MCF 10A (cell line): ENCODE measurements at regions of chr9 and their contacts with region 1.

Region 1: GRCh38 chr9:106648799-106649198 is 214.2 kb upstream of the ZNF462 start:
- DNase-seq: peak; percentile 32
- H3K4me3 Mint-ChIP-seq: no peak overlapping the region
- H3K27ac Mint-ChIP-seq: no peak overlapping the region
- H3K4me1 Mint-ChIP-seq: peaks cover 6% of the 10 kb centered on the region
- H3K27me3 Mint-ChIP-seq: no peaks in the 10 kb centered on the region
- CTCF ChIP-seq: peak; percentile 50

Region 2: DNA sequence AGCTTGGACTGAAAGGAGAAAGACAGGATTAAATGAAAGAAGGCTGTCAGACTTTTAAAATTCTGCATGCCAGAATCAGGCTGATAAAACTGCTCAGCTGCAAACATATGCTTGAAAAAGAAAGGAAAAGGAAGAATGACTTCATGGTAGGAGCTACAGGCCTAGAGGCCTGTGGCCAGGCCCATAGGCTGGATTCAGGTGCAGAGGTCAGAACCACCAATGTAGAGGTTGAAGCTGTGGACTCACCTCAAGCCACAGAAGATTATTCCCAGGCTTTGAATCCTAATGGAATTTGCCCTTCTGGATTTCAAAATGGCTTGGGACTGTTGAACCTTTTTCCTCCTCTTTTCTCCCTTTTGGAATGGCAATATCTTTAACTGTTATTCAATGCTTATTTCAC is 906.7 kb before region 1 on chr9:
- CTCF ChIA-PET with region 1: no interaction called
- POLR2A ChIA-PET with region 1: no interaction called
- intact Hi-C with region 1: no loop called
- DNase-seq: no peak
- H3K4me3 Mint-ChIP-seq: no peak overlapping the region
- H3K27ac Mint-ChIP-seq: no peak overlapping the region
- H3K4me1 Mint-ChIP-seq: no peaks in the 10 kb centered on the region
- H3K27me3 Mint-ChIP-seq: no peaks in the 10 kb centered on the region
- CTCF ChIP-seq: no peak

Region 3: GRCh38 chr9:105901514-105902109 is 747.2 kb before region 1 on chr9:
- CTCF ChIA-PET with region 1: no interaction called
- POLR2A ChIA-PET with region 1: no interaction called
- intact Hi-C with region 1: loop called (anchors 2 kb)
- DNase-seq: peak; percentile 68
- H3K4me3 Mint-ChIP-seq: no peak overlapping the region
- H3K27ac Mint-ChIP-seq: no peak overlapping the region
- H3K4me1 Mint-ChIP-seq: no peaks in the 10 kb centered on the region
- H3K27me3 Mint-ChIP-seq: no peaks in the 10 kb centered on the region
- CTCF ChIP-seq: peak; percentile 63

Region 4: DNA sequence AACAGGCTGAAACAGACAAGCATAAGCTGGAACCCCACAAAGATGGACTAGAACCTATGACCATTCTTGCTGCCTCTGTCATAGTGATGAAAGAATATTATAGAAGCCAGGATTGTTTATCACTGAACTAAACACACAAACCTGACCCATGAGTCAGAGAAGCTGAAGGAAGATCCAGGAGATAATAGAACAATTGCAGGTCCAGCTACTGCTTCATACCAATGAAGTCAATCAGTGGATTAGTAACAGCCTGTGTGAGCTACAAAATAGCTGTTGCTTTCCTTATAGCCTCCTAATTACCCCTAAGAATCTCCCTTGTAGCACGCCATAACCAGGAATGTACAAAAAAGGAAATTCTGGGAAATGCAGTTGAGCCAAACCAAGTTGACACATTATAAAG is 245.7 kb before region 1 on chr9:
- CTCF ChIA-PET with region 1: no interaction called
- POLR2A ChIA-PET with region 1: no interaction called
- intact Hi-C with region 1: no loop called
- DNase-seq: peak; percentile 18
- H3K4me3 Mint-ChIP-seq: no peak overlapping the region
- H3K27ac Mint-ChIP-seq: no peak overlapping the region
- H3K4me1 Mint-ChIP-seq: no peaks in the 10 kb centered on the region
- H3K27me3 Mint-ChIP-seq: no peaks in the 10 kb centered on the region
- CTCF ChIP-seq: no peak

Region 5: GRCh38 chr9:107137495-107138202 is 488.9 kb after region 1 on chr9:
- CTCF ChIA-PET with region 1: interaction called, 3 read pairs
- POLR2A ChIA-PET with region 1: no interaction called
- intact Hi-C with region 1: loop called (anchors 2 kb)
- DNase-seq: peak; percentile 59
- H3K4me3 Mint-ChIP-seq: no peak overlapping the region
- H3K27ac Mint-ChIP-seq: no peak overlapping the region
- H3K4me1 Mint-ChIP-seq: no peaks in the 10 kb centered on the region
- H3K27me3 Mint-ChIP-seq: peaks cover 33% of the 10 kb centered on the region
- CTCF ChIP-seq: peak; percentile 71

Region 6: DNA sequence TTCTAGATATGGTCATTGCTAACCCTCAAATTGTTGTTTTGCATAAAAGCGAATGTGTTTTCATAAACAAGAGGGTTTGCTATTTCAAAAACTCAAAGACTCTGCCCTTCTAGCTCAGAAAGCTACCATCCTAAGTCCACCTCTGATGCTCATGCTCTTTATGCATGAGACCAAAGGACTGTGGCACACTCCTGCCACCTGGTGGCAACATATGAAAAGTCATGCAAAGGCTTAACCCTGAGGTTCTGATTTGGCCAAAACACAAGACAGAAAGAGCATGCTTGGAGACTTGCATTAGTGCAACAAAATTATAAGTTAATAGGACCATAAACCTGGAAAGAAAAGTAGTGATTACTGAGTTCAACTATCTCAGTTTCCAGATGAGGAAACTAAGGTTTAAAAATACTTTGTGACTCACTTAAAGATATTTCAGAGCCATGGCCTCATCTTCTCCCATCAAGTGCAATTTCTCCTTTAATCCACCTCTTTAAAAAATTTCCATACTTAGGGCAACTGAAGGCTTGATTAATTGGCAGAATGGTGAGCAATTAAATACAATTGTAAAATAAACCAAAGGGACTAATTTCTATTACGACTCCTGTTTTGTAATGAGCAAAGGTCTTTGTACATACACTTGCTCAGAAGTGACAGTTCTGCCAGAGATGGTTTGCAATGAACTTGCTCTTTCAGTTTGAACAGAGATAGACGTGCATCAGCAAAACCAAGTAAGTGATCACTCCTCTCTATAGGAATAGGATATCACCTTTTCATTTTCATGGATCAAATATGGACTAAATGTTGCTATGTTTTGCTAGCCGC is 523.6 kb after region 1 on chr9:
- CTCF ChIA-PET with region 1: interaction called, 4 read pairs
- POLR2A ChIA-PET with region 1: no interaction called
- intact Hi-C with region 1: loop called (anchors 1 kb)
- DNase-seq: peak; percentile 84
- H3K4me3 Mint-ChIP-seq: no peak overlapping the region
- H3K27ac Mint-ChIP-seq: no peak overlapping the region
- H3K4me1 Mint-ChIP-seq: peaks cover 8% of the 10 kb centered on the region
- H3K27me3 Mint-ChIP-seq: no peaks in the 10 kb centered on the region
- CTCF ChIP-seq: peak; percentile 87